Endothelial cell of umbilical vein (primary cell): ENCODE measurements at regions of chr13 and their contacts with region 1.

Region 1: GRCh38 chr13:95624020-95624419 is 20.5 kb downstream of the DZIP1 start:
- DNase-seq: peak; percentile 50
- H3K4me3 ChIP-seq: no peak overlapping the region
- H3K27ac ChIP-seq: no peak overlapping the region
- H3K4me1 ChIP-seq: no peaks in the 10 kb centered on the region
- H3K27me3 ChIP-seq: no peaks in the 10 kb centered on the region
- CTCF ChIP-seq: peak; percentile 52 to 59
- POLR2A ChIP-seq: no peak

Region 2: GRCh38 chr13:95603887-95604533 is 20.0 kb before region 1 on chr13:
- CTCF ChIA-PET with region 1: interaction called, 33 read pairs
- POLR2A ChIA-PET with region 1: no interaction called
- dilution Hi-C with region 1: no loop called
- intact Hi-C with region 1: no loop called
- DNase-seq: peak; percentile 66
- H3K4me3 ChIP-seq: no peak overlapping the region
- H3K27ac ChIP-seq: peak overlapping the region; percentile 64
- H3K4me1 ChIP-seq: peaks cover 26% of the 10 kb centered on the region
- H3K27me3 ChIP-seq: no peaks in the 10 kb centered on the region
- CTCF ChIP-seq: no peak
- POLR2A ChIP-seq: no peak

Region 3: GRCh38 chr13:95644601-95645052 is 20.6 kb after region 1 on chr13 and contains the start of gene DZIP1:
- CTCF ChIA-PET with region 1: interaction called, 36 read pairs
- POLR2A ChIA-PET with region 1: interaction called, 6 read pairs
- dilution Hi-C with region 1: no loop called
- intact Hi-C with region 1: no loop called
- DNase-seq: peak; percentile 84
- H3K4me3 ChIP-seq: peak within 1 kb of the TSS; percentile 78 to 93 (median 86)
- H3K27ac ChIP-seq: peak within 1 kb of the TSS; percentile 39
- H3K4me1 ChIP-seq: peaks cover 29% of the 10 kb centered on the region
- H3K27me3 ChIP-seq: no peaks in the 10 kb centered on the region
- CTCF ChIP-seq: no peak
- POLR2A ChIP-seq: no peak
- total RNA-seq, gene DZIP1: 32.1 and 33.9 TPM in 2 replicates

Region 4: GRCh38 chr13:95982144-95982543 is 358.1 kb after region 1 on chr13:
- CTCF ChIA-PET with region 1: interaction called, 30 read pairs
- POLR2A ChIA-PET with region 1: no interaction called
- dilution Hi-C with region 1: no loop called
- intact Hi-C with region 1: loop called (anchors 1 kb)
- DNase-seq: no peak
- H3K4me3 ChIP-seq: no peak overlapping the region
- H3K27ac ChIP-seq: no peak overlapping the region
- H3K4me1 ChIP-seq: no peaks in the 10 kb centered on the region
- H3K27me3 ChIP-seq: no peaks in the 10 kb centered on the region
- CTCF ChIP-seq: no peak
- POLR2A ChIP-seq: no peak

Region 5: GRCh38 chr13:96817336-96817941 is 1193.4 kb after region 1 on chr13:
- CTCF ChIA-PET with region 1: interaction called, 10 read pairs
- POLR2A ChIA-PET with region 1: no interaction called
- dilution Hi-C with region 1: no loop called
- intact Hi-C with region 1: no loop called
- DNase-seq: peak; percentile 10
- H3K4me3 ChIP-seq: no peak overlapping the region
- H3K27ac ChIP-seq: no peak overlapping the region
- H3K4me1 ChIP-seq: no peaks in the 10 kb centered on the region
- H3K27me3 ChIP-seq: no peaks in the 10 kb centered on the region
- CTCF ChIP-seq: peak; percentile 17 to 29
- POLR2A ChIP-seq: no peak